Testis (tissue), 5 donors: ENCODE measurements at regions of chr3 and their contacts with region 1.

Region 1: GRCh38 chr3:197256836-197257444 is 41.5 kb downstream of the DLG1 start:
- DNase-seq: peak; percentile 52
- H3K4me3 ChIP-seq: no peak overlapping the region
- H3K27ac ChIP-seq: no peak overlapping the region
- H3K4me1 ChIP-seq: no peaks in the 10 kb centered on the region
- H3K27me3 ChIP-seq: no peaks in the 10 kb centered on the region
- CTCF ChIP-seq: peak; percentile 44 to 74 (median 54)
- POLR2A ChIP-seq: no peak

Region 2: DNA sequence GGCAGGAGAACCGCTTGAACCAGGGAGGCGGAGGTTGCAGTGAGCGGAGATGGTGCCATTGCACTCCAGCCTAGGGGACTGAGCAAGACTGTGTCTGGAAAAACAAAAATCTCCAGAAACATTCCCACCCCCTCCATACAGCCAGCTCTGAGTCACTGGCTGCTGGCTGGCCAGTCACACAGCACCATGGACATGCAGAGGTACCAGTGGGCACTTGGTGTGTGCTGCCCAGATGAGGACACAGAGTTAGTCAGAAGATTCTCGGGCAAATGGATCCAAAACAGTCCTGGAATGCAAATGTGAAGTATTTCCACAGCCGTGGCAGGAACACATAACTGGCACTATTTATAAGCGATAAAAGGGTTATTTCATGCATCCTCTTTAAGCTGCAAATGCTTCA is 254.2 kb after region 1 on chr3:
- intact Hi-C with region 1: loop called (anchors 5 kb)
- DNase-seq: no peak
- H3K4me3 ChIP-seq: no peak overlapping the region
- H3K27ac ChIP-seq: no peak overlapping the region
- H3K4me1 ChIP-seq: no peaks in the 10 kb centered on the region
- H3K27me3 ChIP-seq: no peaks in the 10 kb centered on the region
- CTCF ChIP-seq: no peak
- POLR2A ChIP-seq: no peak